ENCODE measurements at regions of chr17 and their contacts with region 1.

Region 1: DNA sequence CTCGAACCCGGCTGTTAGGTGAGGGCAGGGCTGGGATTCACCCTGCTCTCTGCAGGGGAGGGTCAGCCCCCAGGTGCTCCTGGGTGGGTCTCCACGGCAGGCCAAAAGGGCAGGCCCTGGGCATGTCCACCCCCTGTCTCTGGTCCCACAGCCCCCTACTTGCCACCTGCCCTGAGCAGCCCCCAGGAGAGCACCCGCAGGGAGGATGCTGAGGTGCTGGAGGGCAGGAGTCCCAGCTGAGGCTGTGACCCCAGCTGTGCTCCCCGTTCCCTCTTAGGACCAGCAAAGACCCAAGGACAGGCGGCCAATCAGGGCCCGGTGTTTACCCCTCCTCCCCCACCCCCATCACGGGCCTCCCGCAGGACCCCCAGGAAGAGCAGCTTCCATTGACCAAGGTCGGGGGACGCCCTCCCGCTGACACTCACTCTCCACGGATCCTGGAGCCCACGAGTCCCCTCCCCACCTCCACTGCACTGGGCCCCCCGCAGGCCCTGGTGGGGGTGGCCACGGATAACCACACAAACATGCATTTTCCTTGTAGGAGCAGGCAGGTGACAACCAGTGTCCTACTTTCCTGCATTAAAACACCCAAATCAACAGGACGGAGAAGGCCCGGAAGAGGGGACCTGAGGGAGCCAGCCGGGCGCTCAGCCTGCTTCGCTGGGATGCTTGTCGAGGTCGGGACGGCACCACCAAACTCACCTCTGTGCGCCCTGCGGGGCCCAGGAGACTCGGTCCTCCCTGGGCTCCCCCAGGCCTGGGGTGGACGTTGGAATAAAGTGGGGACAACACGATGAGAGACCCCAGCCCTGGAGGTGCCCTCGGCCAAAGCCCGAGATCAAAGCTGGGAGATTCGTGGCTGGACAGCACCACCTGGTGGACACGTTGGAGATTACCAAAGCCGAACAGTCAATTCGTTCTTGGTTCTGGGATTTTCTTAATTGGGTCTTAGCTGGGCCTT is 22.5 kb upstream of the ENPP7 start:
- DNase-seq: no peak
- ATAC-seq: no peak

Region 2: GRCh38 chr17:79400989-79401703 is 307.1 kb before region 1 on chr17:
- intact Hi-C with region 1: loop called (anchors 5 kb)
- DNase-seq: no peak
- ATAC-seq: peak; percentile 83

Region 3: GRCh38 chr17:79644617-79645016 is 63.6 kb before region 1 on chr17:
- intact Hi-C with region 1: no loop called
- DNase-seq: no peak
- ATAC-seq: no peak

Region 4: GRCh38 chr17:79721993-79722671 is 13.9 kb after region 1 on chr17:
- intact Hi-C with region 1: no loop called
- DNase-seq: no peak
- ATAC-seq: no peak